RWPE1 (cell line): ENCODE measurements at regions of chr1 and their contacts with region 1.

Region 1: DNA sequence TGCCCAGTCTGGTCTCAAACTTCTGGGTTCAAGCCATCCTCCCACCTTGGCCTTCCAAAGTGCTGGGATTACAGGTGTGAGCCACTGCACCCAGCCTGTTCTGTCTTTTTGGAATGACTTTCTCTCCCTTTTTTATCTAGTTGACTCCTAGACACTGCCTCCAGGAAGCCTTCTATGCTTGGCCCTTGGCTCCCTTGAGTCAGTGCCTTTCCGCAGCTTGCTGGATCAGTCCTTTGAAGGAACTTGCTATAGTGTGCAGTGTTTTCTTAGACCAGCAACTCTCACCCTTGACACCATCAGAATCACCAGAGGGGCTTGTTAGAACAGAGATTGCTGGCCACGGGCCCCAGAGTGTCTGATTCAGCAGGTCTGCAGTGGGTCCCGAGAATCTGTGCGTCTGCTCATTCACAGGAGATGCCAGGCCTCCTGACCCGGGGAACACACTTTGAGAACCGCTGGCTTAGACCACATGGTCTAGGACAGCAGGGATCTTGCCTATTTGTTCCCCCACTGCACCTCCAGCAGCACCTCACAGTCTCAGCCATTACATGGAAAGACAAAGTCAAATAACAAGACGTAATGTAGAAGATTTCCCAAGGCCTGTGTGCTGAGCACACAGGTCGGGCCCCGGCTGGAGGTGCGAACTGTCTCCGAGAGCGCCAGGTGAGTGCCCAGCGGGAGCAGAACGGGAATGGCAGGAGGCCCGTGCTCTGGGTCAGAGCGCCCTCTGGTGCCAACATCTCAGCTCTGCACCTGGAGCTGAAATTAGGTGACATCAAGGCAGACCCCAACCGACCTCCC is 27.4 kb upstream of the CTPS1 start:
- DNase-seq: peak; percentile 84
- H3K27ac ChIP-seq: peak overlapping the region; percentile 14; the same call in 1 of the 2 replicates
- CTCF ChIP-seq: peak; percentile 93

Region 2: GRCh38 chr1:40849801-40850592 is 102.1 kb before region 1 on chr1:
- CTCF ChIA-PET with region 1: interaction called, 109 read pairs
- POLR2A ChIA-PET with region 1: interaction called, 7 read pairs
- DNase-seq: peak; percentile 71
- H3K27ac ChIP-seq: no peak overlapping the region
- CTCF ChIP-seq: peak; percentile 86

Region 3: DNA sequence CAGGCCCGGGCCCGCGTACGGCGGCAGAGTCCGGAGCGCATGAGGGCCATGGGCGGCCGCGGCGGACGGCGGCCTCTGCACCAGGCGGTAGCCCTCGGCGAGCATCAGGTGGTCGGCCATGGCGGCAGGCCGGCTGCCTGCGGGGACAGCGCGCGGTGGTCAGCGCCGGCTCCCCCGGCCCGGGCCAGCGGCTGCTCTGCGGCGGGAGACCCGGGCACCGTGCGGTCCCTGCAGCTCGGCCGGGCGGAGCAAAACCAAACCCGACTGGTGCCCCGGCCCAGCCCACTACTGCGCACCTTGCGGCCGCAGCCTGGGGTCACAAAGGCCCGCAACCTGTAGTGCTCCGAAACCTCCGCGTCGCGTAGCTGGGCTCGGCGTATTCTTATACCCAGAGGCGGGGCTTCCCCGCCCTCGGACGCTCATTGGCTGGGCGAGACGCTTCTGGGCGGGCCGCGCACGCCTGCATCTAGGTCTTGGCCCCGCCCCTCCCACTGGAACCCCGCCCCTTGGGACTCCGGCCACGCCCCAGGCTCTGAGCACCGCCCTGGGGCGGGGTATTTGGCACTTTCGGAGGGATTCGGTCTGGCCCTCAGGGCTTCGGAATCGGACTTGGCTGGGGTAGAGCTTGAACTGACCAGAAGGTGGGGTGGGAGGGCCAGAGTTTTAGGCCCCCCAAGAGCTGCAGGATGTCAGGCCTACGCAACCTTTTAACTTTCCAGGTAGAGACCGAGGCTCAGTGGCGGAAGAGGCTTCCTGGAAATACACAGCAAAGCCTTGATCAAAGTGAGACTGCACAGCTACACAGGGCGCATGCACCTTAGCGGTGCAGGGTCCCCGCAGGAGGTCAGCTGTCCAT is 89.9 kb before region 1 on chr1 and contains the start of gene CITED4:
- CTCF ChIA-PET with region 1: interaction called, 19 read pairs
- POLR2A ChIA-PET with region 1: interaction called, 19 read pairs
- DNase-seq: peak; percentile 95
- H3K27ac ChIP-seq: peak within 1 kb of the TSS; percentile 77
- CTCF ChIP-seq: no peak; the same call in 1 of the 2 replicates